OCI-LY7 (cell line): ENCODE measurements at regions of chr3 and their contacts with region 1.

Region 1: GRCh38 chr3:44477312-44478030 is at the start of gene ZNF445:
- DNase-seq: peak; percentile 67
- H3K4me3 ChIP-seq: peak within 1 kb of the TSS; percentile 73
- H3K27ac ChIP-seq: no peak within 1 kb of the TSS
- H3K4me1 ChIP-seq: peaks cover 7% of the 10 kb centered on the region
- CTCF ChIP-seq: no peak
- total RNA-seq, gene ZNF445: 3.4 TPM in 2 replicates

Region 2: GRCh38 chr3:44510000-44510368 is 32.5 kb after region 1 on chr3:
- CTCF ChIA-PET with region 1: no interaction called
- POLR2A ChIA-PET with region 1: no interaction called
- intact Hi-C with region 1: loop called (anchors 2 kb)
- DNase-seq: peak; percentile 59
- H3K4me3 ChIP-seq: peak overlapping the region; percentile 82
- H3K27ac ChIP-seq: peak overlapping the region; percentile 33
- H3K4me1 ChIP-seq: peaks cover 6% of the 10 kb centered on the region
- CTCF ChIP-seq: no peak

Region 3: GRCh38 chr3:44642337-44642736 is 164.9 kb after region 1 on chr3:
- CTCF ChIA-PET with region 1: no interaction called
- POLR2A ChIA-PET with region 1: no interaction called
- intact Hi-C with region 1: no loop called
- DNase-seq: no peak
- H3K4me3 ChIP-seq: no peak overlapping the region
- H3K27ac ChIP-seq: no peak overlapping the region
- H3K4me1 ChIP-seq: peaks cover 9% of the 10 kb centered on the region
- CTCF ChIP-seq: no peak